HCT116 (cell line): ENCODE measurements at regions of chr22 and their contacts with region 1.

Region 1: DNA sequence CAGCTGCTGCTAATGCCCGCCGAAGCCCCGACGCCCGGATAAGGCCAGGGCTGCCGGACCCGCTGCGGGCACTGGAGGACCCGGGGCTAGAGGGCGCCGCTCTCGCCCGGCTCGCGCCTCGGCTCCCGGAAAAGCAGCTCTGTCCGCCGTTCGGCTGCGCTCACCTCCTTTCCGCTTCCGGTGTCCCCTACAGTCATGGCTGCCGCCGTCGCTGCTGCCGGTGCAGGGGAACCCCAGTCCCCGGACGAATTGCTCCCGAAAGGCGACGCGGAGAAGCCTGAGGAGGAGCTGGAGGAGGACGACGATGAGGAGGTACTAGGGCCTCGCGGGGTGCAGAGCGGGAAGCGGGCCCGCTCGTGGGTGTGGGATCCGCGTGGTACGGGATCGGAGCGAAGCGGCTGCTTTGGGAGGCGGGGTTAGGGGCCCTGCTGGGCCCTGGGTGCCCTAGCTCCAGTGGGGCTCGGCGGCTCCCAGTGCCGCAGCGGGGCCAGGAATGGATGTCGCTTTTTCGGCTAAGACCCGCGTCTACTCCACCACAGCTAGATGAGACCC is at the start of gene TOMM22:
- DNase-seq: peak; percentile 72
- ATAC-seq: peak; percentile 98
- H3K4me3 ChIP-seq: peak within 1 kb of the TSS; percentile 75 to 98
- H3K27ac ChIP-seq: peak within 1 kb of the TSS; percentile 75
- H3K4me1 ChIP-seq: peaks cover 2 to 12% of the 10 kb centered on the region in 2 experiments; a peak in 3 of 4 replicates
- H3K27me3 ChIP-seq: no peaks in the 10 kb centered on the region
- CTCF ChIP-seq: peak; percentile 58 to 72 (median 64); a peak in 5 of 6 replicates
- POLR2A ChIP-seq: peak; percentile 77
- RAD21 ChIP-seq: peak; percentile 60
- total RNA-seq, gene TOMM22: 136 TPM

Region 2: GRCh38 chr22:38656256-38657044 is 25.4 kb before region 1 on chr22 and contains the starts of genes CBY1 and FAM227A:
- CTCF ChIA-PET with region 1: interaction called, 4 read pairs
- POLR2A ChIA-PET with region 1: interaction called, 5 read pairs
- RAD21 ChIA-PET with region 1: no interaction called
- intact Hi-C with region 1: loop called (anchors 2 kb)
- DNase-seq: peak; percentile 76
- ATAC-seq: peak; percentile 88
- H3K4me3 ChIP-seq: peak within 1 kb of the TSS; percentile 82 to 84
- H3K27ac ChIP-seq: peak within 1 kb of the TSS; percentile 84
- H3K4me1 ChIP-seq: peaks cover 4 to 22% of the 10 kb centered on the region in 2 experiments; a peak in 3 of 4 replicates
- H3K27me3 ChIP-seq: no peaks in the 10 kb centered on the region
- CTCF ChIP-seq: no peak
- POLR2A ChIP-seq: no peak
- RAD21 ChIP-seq: no peak
- total RNA-seq, gene CBY1: 27.6 TPM
- total RNA-seq, gene FAM227A: 3.9 TPM

Region 3: DNA sequence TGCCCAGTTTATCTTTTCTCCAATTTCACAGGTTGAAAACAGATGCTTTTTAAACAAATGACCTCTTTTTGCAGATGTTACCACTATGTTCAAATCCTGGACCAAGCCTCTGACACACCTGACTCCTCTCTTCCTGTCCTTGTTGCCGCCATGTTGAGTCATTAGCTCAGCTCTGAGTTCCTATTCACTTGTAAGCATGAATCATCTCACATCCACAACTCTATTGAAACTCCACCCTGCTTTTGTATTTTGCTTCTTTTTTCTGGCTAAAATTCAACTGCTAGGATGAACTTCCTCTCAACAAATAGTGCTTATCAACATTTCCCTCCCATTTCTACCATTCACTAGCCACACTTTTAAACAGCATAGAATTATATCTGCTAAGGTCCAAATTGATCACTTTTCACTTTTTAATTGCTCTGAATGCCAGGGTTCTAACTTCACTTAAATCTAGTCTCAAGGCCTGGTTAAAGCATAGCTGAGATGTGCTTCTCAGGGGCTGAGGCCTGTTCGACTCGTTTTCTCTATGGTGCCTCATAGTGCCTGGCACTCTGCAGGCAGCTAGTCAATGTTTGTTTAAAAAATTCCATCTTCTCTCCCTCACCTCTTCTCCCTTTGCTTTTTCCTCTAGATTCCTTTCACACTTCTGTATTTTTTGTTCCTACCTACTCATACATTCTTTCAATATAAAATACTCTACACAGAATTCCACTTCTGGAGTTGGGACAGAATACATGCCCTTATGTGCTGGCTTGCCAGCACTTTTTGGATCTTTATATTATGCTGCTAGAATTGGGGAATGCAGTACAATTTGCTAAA is 15.0 kb after region 1 on chr22:
- CTCF ChIA-PET with region 1: interaction called, 10 read pairs
- POLR2A ChIA-PET with region 1: interaction called, 26 read pairs
- RAD21 ChIA-PET with region 1: interaction called in 1 of 2 experiments, 4 read pairs
- intact Hi-C with region 1: no loop called
- DNase-seq: peak; percentile 68
- ATAC-seq: no peak
- H3K4me3 ChIP-seq: peak overlapping the region; percentile 11 to 26; a peak in 3 of 4 replicates
- H3K27ac ChIP-seq: peak overlapping the region; percentile 66
- H3K4me1 ChIP-seq: peaks cover 32 to 62% of the 10 kb centered on the region in 2 experiments
- H3K27me3 ChIP-seq: no peaks in the 10 kb centered on the region
- CTCF ChIP-seq: no peak
- POLR2A ChIP-seq: no peak
- RAD21 ChIP-seq: no peak